Sciatic nerve (tissue), 2 donors: ENCODE measurements at regions of chr1 and their contacts with region 1.

Region 1: GRCh38 chr1:73467731-73468130 is 730.2 kb downstream of the LRRIQ3 start:
- DNase-seq: no peak
- ATAC-seq: no peak

Region 2: GRCh38 chr1:71488555-71489252 is 1979.0 kb before region 1 on chr1:
- intact Hi-C with region 1: loop called (anchors 5 kb)
- DNase-seq: no peak
- ATAC-seq: no peak